Activated naive CD4-positive, alpha-beta T cell treated with anti-CD3 and anti-CD28 coated beads for 36 hours (primary cell): ENCODE measurements at regions of chr6 and their contacts with region 1.

Region 1: DNA sequence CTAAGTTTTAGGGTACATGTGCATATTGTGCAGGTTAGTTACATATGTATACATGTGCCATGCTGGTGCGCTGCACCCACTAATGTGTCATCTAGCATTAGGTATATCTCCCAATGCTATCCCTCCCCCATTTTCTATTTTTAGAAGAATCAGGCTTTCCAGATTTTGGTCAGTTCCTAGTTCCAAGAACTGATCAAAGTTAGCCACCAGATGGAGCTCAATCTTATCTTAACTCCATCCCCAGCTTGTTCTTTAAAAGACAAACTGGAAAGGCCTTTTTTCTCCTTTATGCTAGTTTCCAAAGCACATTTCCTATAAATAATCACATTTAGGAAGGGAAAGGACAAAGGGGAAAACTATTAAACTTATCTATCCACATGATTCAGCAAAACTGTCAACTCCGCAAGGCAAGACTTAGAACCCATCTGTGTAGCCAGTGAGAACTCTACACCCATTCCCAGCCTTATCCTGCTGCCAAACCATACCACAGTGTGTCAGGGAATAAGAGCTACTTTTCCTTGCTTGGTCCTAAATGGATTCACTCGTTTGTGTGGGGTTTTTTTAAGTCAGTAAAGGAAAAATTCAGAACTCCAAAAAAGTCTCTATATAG is 22.8 kb upstream of the KHDC1 start:
- DNase-seq: no peak
- H3K4me3 Mint-ChIP-seq: no peak overlapping the region
- H3K27ac Mint-ChIP-seq: no peak overlapping the region
- H3K4me1 Mint-ChIP-seq: no peaks in the 10 kb centered on the region
- H3K27me3 Mint-ChIP-seq: no peaks in the 10 kb centered on the region

Region 2: GRCh38 chr6:73388800-73389512 is 103.2 kb after region 1 on chr6:
- CTCF ChIA-PET with region 1: interaction called, 7 read pairs
- intact Hi-C with region 1: loop called (anchors 1 kb)
- DNase-seq: peak; percentile 64
- H3K4me3 Mint-ChIP-seq: peak overlapping the region; percentile 73
- H3K27ac Mint-ChIP-seq: no peak overlapping the region
- H3K4me1 Mint-ChIP-seq: peaks cover 4% of the 10 kb centered on the region
- H3K27me3 Mint-ChIP-seq: peaks cover 3% of the 10 kb centered on the region

Region 3: GRCh38 chr6:73969971-73970970 is 684.5 kb after region 1 on chr6:
- CTCF ChIA-PET with region 1: no interaction called
- intact Hi-C with region 1: no loop called
- DNase-seq: peak; percentile 9
- H3K4me3 Mint-ChIP-seq: no peak overlapping the region
- H3K27ac Mint-ChIP-seq: no peak overlapping the region
- H3K4me1 Mint-ChIP-seq: no peaks in the 10 kb centered on the region
- H3K27me3 Mint-ChIP-seq: no peaks in the 10 kb centered on the region